ENCODE measurements at regions of chr6 and their contacts with region 1.

Region 1: GRCh38 chr6:104771258-104771832 is 88.4 kb downstream of the HACE1 start:
- DNase-seq: no peak
- ATAC-seq: peak in 1 of 4 donors; percentile 58
- H3K4me3 ChIP-seq: no peak overlapping the region
- H3K27ac ChIP-seq: no peak overlapping the region
- H3K4me1 ChIP-seq: peaks cover 3% of the 10 kb centered on the region
- H3K27me3 ChIP-seq: no peaks in the 10 kb centered on the region
- CTCF ChIP-seq: peak; percentile 53

Region 2: DNA sequence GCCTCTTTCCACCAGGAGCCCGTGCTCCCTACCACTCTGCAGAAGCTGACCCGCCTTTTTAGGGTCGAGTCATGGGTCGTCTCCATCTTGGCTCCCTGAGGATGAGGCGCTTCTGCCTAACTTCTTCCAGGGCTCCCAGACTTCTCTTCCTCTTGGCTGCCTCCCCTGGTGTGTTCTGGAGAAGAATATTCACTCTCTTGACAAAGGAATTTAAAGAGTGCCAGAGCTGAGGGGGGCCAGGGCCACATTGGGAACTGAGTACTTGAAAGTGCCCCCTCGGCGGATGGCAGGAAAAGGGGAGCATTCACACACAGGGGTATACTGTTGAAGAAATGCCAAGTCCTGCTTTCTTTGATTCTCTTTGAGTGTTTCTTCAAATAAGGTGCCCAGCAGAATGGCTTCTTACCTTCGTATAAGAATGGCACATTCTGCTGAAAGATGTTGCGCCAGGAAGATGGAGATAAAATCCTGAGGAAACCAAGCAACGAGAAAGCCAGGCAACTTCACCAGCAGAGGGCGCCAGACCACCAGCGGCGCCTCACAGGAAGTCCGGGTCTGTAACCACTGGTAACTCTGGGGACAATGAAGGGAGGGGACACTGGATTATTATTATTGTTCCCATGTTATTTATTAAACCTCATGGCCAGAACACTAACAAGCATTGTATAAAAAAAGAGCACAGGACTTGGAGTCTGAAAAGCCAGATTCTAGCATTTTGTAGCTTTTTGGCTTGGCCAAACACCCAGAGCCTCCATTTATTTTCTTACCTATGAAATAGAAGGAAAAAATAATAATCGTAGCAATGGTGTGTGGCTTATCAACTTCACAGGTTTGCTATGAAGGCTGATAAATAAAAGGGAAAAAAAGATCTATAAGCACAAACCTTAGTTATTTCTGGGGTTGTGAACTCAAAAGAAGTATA is 88.4 kb before region 1 on chr6:
- intact Hi-C with region 1: loop called (anchors 5 to 10 kb)
- DNase-seq: peak; percentile 36 to 54
- ATAC-seq: no peak
- H3K4me3 ChIP-seq: no peak overlapping the region
- H3K27ac ChIP-seq: no peak overlapping the region
- H3K4me1 ChIP-seq: no peaks in the 10 kb centered on the region
- H3K27me3 ChIP-seq: no peaks in the 10 kb centered on the region
- CTCF ChIP-seq: peak; percentile 60

Measured in psoas muscle (tissue), 8 donors.